AG04449 (cell line): ENCODE measurements at regions of chr9 and their contacts with region 1.

Region 1: DNA sequence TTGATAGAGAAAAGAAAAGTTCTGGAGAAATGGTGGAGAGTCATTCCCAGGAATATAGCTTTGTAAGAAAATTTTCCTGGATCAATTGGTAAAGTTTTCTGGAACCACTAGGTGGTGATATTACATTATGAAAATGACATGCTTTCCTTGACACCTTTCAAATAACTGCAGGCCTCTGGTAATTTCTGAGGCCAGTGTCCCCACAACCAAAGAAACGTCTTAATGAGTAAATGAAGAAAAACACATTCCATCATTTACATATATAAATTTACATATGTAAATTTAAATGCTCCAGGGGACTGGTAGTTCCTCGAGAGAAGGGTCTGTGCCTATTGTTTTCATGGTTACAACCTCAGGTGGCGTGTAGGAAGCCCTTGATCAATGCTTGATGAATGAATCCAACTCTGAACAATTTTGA is 17.2 kb upstream of the RGS3 start:
- DNase-seq: no peak
- H3K4me3 ChIP-seq: no peak overlapping the region
- CTCF ChIP-seq: peak; percentile 13

Region 2: DNA sequence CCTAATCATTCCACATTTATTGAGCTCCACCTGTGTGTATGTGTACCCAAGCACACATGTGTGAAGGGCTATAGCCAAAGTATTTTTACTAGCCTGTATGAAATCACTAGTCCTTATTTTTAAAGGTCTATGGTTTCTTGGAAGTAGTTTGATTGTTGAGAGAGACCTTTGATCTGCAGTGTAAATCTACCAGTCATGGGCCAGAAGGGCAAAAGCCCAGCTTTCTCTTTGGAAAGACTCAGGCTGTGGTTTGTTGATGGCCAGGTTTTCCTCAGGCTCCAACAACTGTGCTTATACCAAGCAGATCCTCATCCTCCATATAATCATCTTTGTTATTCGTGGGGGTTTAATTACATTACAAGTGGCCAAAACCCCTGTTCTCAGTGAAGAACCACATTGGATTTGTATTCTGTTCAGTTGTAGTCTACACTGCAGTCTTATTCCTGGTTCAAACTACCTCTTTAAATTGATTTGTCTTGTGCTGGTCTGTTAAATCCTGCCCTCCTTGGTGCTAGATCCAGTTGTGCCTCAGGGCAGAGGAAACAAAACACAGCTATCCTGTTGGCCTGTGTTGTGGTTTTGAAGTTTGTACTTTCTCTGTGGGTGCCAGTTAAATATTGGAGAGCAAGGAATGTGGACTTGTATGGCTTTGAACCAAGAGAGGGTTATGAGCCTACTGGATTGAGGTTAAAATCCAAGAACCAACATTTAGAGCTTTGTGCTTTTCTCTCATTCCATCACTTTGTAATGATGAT is 184.2 kb before region 1 on chr9:
- CTCF ChIA-PET with region 1: no interaction called
- POLR2A ChIA-PET with region 1: no interaction called
- DNase-seq: no peak
- H3K4me3 ChIP-seq: no peak overlapping the region
- CTCF ChIP-seq: no peak

Region 3: GRCh38 chr9:113564498-113565237 is 118.3 kb after region 1 on chr9:
- CTCF ChIA-PET with region 1: interaction called, 21 read pairs
- POLR2A ChIA-PET with region 1: no interaction called
- DNase-seq: no peak
- H3K4me3 ChIP-seq: peak overlapping the region; percentile 74
- CTCF ChIP-seq: peak; percentile 6

Region 4: DNA sequence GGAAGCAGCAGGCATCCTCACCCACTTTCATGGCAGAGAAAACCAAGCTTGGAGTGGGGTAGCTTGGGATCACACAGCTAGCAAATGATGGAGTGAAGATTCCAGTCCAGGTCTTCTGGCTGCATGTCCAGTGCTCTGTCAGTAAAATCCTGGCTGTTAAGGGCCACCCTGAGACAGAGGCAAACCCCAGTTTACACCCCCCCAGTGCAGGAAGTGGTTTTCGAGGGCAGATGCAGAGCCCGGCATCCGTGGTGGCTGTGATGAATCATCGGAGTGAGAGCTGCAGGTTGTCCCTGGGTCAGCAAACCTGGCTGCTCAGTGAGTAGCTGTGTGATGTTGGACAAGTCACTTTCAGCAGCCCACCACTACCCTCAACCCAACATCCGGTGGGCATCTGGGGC is 132.6 kb after region 1 on chr9:
- CTCF ChIA-PET with region 1: interaction called, 405 read pairs
- POLR2A ChIA-PET with region 1: interaction called, 3 read pairs
- DNase-seq: peak; percentile 74
- H3K4me3 ChIP-seq: no peak overlapping the region
- CTCF ChIP-seq: no peak

Region 5: DNA sequence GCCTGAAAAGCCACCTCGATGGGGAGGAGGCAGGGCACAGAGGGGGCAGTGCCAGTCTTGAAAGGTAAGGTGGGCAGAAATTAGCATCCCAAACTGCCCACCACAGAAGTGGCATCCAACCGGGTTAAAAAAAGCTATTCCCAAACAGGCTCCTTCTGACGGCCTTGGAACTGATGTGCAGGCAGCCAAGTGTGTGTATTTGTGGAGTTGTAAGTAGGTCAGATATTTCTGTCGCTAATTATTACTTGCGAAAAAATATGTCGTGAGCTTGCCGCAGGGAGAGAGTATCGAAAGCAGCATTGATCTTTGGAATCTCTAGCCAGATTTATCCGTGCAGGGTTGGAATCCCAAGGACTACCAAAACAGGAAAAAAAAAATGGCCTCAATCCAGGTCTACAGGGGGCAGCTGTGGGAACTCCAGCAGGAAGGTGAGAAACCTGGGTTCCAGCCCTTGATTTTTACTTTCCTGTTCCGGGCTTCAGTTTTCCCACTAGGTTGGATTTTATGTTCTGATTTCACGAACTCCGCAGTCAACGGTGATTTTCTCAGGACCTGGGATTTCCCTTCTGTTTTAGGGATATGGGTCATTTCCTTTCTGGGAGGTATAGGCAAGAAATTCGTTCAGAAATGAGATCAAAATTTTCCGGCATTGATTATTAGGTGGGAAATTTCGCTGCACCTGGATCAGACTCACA is 218.0 kb after region 1 on chr9:
- CTCF ChIA-PET with region 1: interaction called, 482 read pairs
- POLR2A ChIA-PET with region 1: no interaction called
- DNase-seq: no peak
- H3K4me3 ChIP-seq: no peak overlapping the region
- CTCF ChIP-seq: no peak

Region 6: GRCh38 chr9:113669522-113670115 is 223.3 kb after region 1 on chr9:
- CTCF ChIA-PET with region 1: interaction called, 20 read pairs
- POLR2A ChIA-PET with region 1: no interaction called
- DNase-seq: no peak
- H3K4me3 ChIP-seq: no peak overlapping the region
- CTCF ChIP-seq: no peak